IMR-90 (cell line): ENCODE measurements at regions of chr20 and their contacts with region 1.

Region 1: DNA sequence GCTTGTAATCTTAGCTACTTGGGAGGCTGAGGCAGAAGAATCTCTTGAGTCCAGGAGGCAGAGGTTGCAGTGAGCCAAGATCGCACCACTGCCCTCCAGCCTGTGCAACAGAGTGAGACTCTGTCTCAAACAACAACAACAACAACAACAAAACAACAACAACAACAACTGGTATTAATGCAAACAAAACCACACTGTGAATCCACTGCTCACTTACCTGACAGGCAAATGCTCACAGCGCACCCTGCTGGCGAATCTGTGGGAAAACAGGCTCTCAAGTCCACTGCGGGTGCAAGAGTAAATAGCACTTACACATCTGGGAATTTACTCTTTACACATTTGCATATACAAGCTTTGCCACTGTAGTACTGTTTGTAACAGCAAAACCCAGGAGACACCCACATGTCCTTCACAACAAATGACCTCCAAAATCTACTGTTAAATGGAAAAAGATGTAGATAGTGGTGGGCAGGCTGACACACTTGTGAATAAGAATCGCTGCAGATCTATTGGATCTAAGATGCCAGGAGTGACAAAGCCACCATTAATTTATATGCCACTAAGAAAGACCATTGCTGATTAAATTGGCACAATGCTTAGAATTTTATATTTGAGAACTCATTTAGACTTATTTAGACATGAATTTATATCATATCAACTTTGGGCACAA is 29.3 kb downstream of the NSFL1C start:
- DNase-seq: peak; percentile 82
- ATAC-seq: peak; percentile 72
- H3K4me3 ChIP-seq: no peak overlapping the region
- H3K27ac ChIP-seq: no peak overlapping the region
- H3K4me1 ChIP-seq: no peaks in the 10 kb centered on the region
- H3K27me3 ChIP-seq: no peaks in the 10 kb centered on the region
- CTCF ChIP-seq: peak; percentile 89
- POLR2A ChIP-seq: no peak
- RAD21 ChIP-seq: peak; percentile 88

Region 2: DNA sequence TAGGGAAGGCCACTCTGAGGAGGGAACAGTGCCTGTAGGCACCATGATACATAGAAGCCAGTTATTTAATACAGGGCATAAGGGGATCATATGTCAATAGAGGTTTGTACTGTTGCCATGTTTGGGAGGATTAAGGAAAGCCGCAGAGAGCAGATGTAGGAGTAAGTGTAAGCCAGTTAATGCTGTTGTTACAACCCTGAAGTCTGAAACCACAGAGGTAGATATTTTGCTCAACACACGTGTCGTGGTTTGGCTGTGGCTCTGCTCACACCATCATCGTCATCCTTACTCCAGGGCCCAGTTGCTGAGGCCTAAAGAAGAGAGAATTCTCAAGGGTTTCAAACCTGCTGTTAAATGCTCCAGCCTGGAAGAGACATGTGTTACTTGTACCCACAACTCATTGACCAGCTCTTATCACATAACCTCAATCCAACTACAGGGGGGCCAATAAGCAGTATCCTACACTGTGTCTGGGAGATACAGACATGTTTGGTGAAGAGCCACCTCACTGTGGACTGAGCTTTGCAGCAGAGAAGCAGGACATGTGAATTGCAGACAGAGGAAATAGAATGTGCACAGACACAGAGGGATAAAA is 350.0 kb before region 1 on chr20:
- CTCF ChIA-PET with region 1: no interaction called
- POLR2A ChIA-PET with region 1: no interaction called
- dilution Hi-C with region 1: no loop called
- in situ Hi-C with region 1: no loop called
- intact Hi-C with region 1: no loop called
- DNase-seq: no peak
- ATAC-seq: no peak
- H3K4me3 ChIP-seq: no peak overlapping the region
- H3K27ac ChIP-seq: no peak overlapping the region
- H3K4me1 ChIP-seq: no peaks in the 10 kb centered on the region
- H3K27me3 ChIP-seq: no peaks in the 10 kb centered on the region; the same call in 1 of the 2 replicates
- CTCF ChIP-seq: no peak
- POLR2A ChIP-seq: no peak
- RAD21 ChIP-seq: no peak

Region 3: GRCh38 chr20:1118336-1119127 is 318.8 kb before region 1 on chr20 and contains the start of gene PSMF1:
- CTCF ChIA-PET with region 1: no interaction called
- POLR2A ChIA-PET with region 1: no interaction called
- dilution Hi-C with region 1: no loop called
- in situ Hi-C with region 1: loop called (anchors 10 kb)
- intact Hi-C with region 1: no loop called
- DNase-seq: peak; percentile 86
- ATAC-seq: peak; percentile 96
- H3K4me3 ChIP-seq: peak within 1 kb of the TSS; percentile 96
- H3K27ac ChIP-seq: peak within 1 kb of the TSS; percentile 63
- H3K4me1 ChIP-seq: peaks cover 14% of the 10 kb centered on the region
- H3K27me3 ChIP-seq: no peaks in the 10 kb centered on the region
- CTCF ChIP-seq: no peak
- POLR2A ChIP-seq: peak; percentile 56
- RAD21 ChIP-seq: no peak
- total RNA-seq, gene PSMF1: 93.6 and 120 TPM in 2 replicates

Region 4: GRCh38 chr20:1212607-1213396 is 224.6 kb before region 1 on chr20:
- CTCF ChIA-PET with region 1: no interaction called
- POLR2A ChIA-PET with region 1: no interaction called
- dilution Hi-C with region 1: no loop called
- in situ Hi-C with region 1: no loop called
- intact Hi-C with region 1: loop called (anchors 5 kb)
- DNase-seq: peak; percentile 72
- ATAC-seq: peak; percentile 99
- H3K4me3 ChIP-seq: no peak overlapping the region
- H3K27ac ChIP-seq: no peak overlapping the region
- H3K4me1 ChIP-seq: no peaks in the 10 kb centered on the region
- H3K27me3 ChIP-seq: peaks cover 29% of the 10 kb centered on the region
- CTCF ChIP-seq: peak; percentile 77
- POLR2A ChIP-seq: no peak
- RAD21 ChIP-seq: peak; percentile 71

Region 5: DNA sequence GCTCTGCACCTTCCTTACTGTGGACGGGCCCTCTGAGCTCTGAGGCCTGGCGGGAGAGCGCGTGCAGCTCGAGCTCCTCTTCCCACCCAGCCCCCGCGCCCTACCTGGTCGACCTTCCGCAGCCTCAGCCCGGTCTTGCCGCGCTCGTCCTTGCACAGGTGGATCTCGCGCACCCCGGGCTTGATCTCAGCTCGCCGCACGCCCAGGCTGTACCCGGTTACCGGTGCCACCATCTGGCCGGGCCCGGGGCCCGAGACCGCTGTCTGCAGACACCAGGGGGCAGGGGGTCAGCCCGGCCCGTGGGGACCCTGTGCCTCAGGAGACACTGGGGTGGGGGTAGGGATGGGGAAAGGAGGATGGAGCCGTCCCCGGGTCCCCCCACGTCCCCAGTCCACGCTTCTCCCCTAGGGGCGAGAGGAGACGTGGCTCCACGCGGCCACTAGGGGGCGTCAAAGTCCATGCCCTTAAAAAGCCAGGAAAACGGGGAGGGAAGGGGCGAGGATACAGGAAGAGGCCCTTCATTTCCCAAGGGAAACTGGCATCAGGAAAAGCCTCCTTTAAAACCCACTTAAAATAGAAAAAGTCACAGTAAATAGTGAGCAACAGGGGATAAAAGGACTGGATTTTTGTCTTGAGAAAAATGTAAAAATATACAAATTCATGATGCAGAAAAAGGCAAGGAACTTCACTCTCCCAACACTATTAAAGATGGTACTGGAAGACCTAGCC is 124.0 kb before region 1 on chr20:
- CTCF ChIA-PET with region 1: interaction called, 4 read pairs
- POLR2A ChIA-PET with region 1: interaction called, 4 read pairs
- dilution Hi-C with region 1: no loop called
- in situ Hi-C with region 1: loop called (anchors 5 kb)
- intact Hi-C with region 1: loop called (anchors 1 kb)
- DNase-seq: peak; percentile 71
- ATAC-seq: peak; percentile 95
- H3K4me3 ChIP-seq: peak overlapping the region; percentile 13; the same call in 1 of the 2 replicates
- H3K27ac ChIP-seq: peak overlapping the region; percentile 20; the same call in 1 of the 2 replicates
- H3K4me1 ChIP-seq: no peaks in the 10 kb centered on the region
- H3K27me3 ChIP-seq: no peaks in the 10 kb centered on the region
- CTCF ChIP-seq: peak; percentile 95
- POLR2A ChIP-seq: no peak
- RAD21 ChIP-seq: peak; percentile 93

Region 6: GRCh38 chr20:1325173-1326030 is 112.0 kb before region 1 on chr20:
- CTCF ChIA-PET with region 1: interaction called, 10 read pairs
- POLR2A ChIA-PET with region 1: no interaction called
- dilution Hi-C with region 1: no loop called
- in situ Hi-C with region 1: no loop called
- intact Hi-C with region 1: no loop called
- DNase-seq: peak; percentile 97
- ATAC-seq: peak; percentile 80
- H3K4me3 ChIP-seq: peak overlapping the region; percentile 60
- H3K27ac ChIP-seq: peak overlapping the region; percentile 89
- H3K4me1 ChIP-seq: peaks cover 34% of the 10 kb centered on the region
- H3K27me3 ChIP-seq: no peaks in the 10 kb centered on the region
- CTCF ChIP-seq: no peak; the same call in 1 of the 2 replicates
- POLR2A ChIP-seq: peak; percentile 97
- RAD21 ChIP-seq: 0 out of 2 replicates have a peak, but pooled peaks have one; percentile 1

Region 7: DNA sequence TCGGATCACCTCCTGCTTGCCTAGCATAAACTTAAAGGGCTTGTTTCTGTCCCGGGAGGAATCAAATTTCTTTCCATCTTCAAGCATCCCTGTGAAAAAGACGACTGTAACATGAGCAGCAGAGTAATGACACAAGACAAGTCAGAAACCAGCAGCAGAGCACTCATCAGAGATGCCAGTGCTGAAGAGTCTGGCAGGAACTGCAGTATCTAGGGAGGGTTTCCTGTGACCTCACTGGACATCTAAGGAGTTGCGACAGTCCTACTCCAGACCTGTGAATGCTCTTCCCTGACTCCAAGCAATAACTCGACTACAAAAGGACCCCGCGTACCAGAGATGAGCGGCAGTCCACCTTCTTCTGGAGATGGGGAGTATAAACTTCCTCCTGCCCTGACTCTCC is 61.9 kb before region 1 on chr20:
- CTCF ChIA-PET with region 1: interaction called, 3 read pairs
- POLR2A ChIA-PET with region 1: no interaction called
- dilution Hi-C with region 1: no loop called
- in situ Hi-C with region 1: no loop called
- intact Hi-C with region 1: loop called (anchors 5 kb)
- DNase-seq: peak; percentile 93
- ATAC-seq: peak; percentile 82
- H3K4me3 ChIP-seq: no peak overlapping the region
- H3K27ac ChIP-seq: peak overlapping the region; percentile 29; the same call in 1 of the 2 replicates
- H3K4me1 ChIP-seq: peaks cover 37% of the 10 kb centered on the region
- H3K27me3 ChIP-seq: no peaks in the 10 kb centered on the region
- CTCF ChIP-seq: no peak
- POLR2A ChIP-seq: no peak
- RAD21 ChIP-seq: no peak; the same call in 1 of the 2 replicates

Region 8: DNA sequence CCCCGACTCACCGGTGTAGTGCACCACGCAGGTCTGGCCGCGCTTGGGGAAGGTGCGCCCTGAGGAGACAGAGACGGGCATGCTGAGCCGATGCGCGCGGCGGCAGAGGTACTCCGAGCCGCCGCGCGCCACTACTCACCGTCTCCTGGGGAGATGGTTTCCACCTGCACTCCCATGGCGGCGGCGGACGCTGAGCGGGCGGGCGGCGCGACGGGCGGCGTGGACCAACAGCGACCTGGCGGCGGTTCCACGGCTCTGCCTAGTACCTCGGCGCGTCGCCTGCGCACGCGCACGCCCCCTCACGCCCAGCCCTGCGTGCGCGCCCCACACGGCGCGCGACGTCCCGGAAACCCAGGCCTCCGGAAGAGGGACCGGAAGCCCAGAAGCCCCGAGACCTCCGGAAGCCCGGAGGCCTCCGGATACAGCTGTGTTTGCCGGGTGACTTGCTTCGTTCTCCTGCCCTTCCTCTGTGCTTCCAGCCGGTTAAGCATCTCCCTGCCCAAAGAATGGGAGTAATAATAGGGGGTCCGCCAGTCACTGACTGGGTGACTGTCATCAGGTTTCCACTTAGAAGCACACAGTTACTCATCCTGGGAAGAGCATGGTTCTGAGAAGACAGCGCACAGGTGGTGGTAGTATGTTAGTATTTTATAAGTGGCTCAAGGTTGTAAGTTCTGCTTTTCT is 44.4 kb before region 1 on chr20 and contains the start of gene FKBP1A:
- CTCF ChIA-PET with region 1: interaction called, 6 read pairs
- POLR2A ChIA-PET with region 1: interaction called, 6 read pairs
- dilution Hi-C with region 1: no loop called
- in situ Hi-C with region 1: no loop called
- intact Hi-C with region 1: loop called (anchors 5 kb)
- DNase-seq: peak; percentile 90
- ATAC-seq: peak; percentile 94
- H3K4me3 ChIP-seq: peak within 1 kb of the TSS; percentile 65
- H3K27ac ChIP-seq: peak within 1 kb of the TSS; percentile 85
- H3K4me1 ChIP-seq: peaks cover 26% of the 10 kb centered on the region
- H3K27me3 ChIP-seq: no peaks in the 10 kb centered on the region
- CTCF ChIP-seq: 0 out of 2 replicates have a peak, but pooled peaks have one; percentile 8
- POLR2A ChIP-seq: peak; percentile 80
- RAD21 ChIP-seq: 0 out of 2 replicates have a peak, but pooled peaks have one; percentile 6
- total RNA-seq, gene FKBP1A: 91.9 and 120 TPM in 2 replicates

Region 9: DNA sequence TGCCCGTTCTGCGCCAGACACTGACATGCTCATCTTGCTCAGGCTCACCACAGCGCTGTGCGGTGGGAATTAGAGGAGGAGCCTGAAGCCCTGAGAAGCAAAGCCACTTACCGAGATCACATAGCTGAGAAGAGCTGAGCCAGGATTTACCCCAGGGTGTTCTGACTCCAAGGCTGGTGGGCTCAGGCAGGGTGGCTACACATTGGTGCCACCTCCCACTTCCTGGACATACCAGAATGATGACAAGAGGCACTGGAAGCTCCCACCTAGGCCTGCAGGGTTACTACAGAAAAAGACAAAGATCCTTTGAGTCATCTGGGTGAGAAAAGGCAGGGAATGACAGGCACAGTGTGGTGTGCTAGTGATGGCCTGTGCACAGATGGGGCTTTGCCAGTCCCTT is 20.1 kb before region 1 on chr20:
- CTCF ChIA-PET with region 1: no interaction called
- POLR2A ChIA-PET with region 1: no interaction called
- dilution Hi-C with region 1: no loop called
- in situ Hi-C with region 1: no loop called
- intact Hi-C with region 1: no loop called
- DNase-seq: peak; percentile 49
- ATAC-seq: peak; percentile 10
- H3K4me3 ChIP-seq: no peak overlapping the region
- H3K27ac ChIP-seq: no peak overlapping the region; the same call in 1 of the 2 replicates
- H3K4me1 ChIP-seq: peaks cover 4% of the 10 kb centered on the region; the same call in 1 of the 2 replicates
- H3K27me3 ChIP-seq: no peaks in the 10 kb centered on the region
- CTCF ChIP-seq: no peak
- POLR2A ChIP-seq: no peak
- RAD21 ChIP-seq: no peak

Region 10: DNA sequence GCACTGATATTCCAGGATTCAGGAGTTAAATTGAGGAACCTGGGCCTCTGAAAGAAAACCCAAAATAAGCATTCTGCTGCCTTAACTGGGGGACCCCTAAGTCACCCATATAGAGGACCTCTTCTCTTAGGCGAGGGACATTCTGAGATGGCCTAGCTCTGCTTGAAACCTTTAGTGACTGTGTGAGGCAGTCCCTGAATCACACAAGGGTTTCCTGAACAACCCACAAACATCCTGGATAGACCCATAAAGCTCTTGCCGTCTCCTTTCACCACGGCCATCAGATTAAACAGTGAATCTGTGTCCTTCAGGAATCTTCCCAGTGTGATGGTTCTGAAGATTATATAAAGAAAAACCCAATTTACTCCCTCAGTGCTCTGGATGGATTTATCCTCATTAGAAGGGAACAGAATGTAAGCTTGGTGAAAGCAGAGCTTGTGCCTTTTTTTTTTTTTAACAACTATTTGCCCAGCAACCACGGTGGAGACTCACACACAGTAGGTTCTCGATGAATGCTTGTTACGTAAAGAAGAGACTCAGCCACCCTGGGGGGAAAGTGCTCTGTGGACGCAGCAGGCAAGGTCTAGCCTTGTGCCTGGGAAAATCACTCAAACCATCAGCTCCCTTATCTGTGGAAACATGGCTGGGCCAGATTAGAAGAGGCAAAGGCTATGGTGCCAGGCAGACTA is 259.3 kb after region 1 on chr20:
- CTCF ChIA-PET with region 1: no interaction called
- POLR2A ChIA-PET with region 1: no interaction called
- dilution Hi-C with region 1: no loop called
- in situ Hi-C with region 1: no loop called
- intact Hi-C with region 1: no loop called
- DNase-seq: no peak
- ATAC-seq: no peak
- H3K4me3 ChIP-seq: no peak overlapping the region
- H3K27ac ChIP-seq: no peak overlapping the region
- H3K4me1 ChIP-seq: no peaks in the 10 kb centered on the region
- H3K27me3 ChIP-seq: no peaks in the 10 kb centered on the region
- CTCF ChIP-seq: no peak
- POLR2A ChIP-seq: no peak
- RAD21 ChIP-seq: no peak